PC-9 (cell line): ENCODE measurements at regions of chr21 and their contacts with region 1.

Region 1: GRCh38 chr21:15210235-15210739 is 145.5 kb upstream of the NRIP1 start:
- DNase-seq: peak; percentile 90 to 95
- H3K4me3 ChIP-seq: 0 out of 2 replicates have a peak overlapping the region, but pooled peaks have one; percentile 26
- H3K27ac ChIP-seq: peak overlapping the region; percentile 83
- H3K4me1 ChIP-seq: peaks cover 44% of the 10 kb centered on the region
- H3K27me3 ChIP-seq: no peaks in the 10 kb centered on the region
- CTCF ChIP-seq: no peak

Region 2: GRCh38 chr21:14916676-14917141 is 293.6 kb before region 1 on chr21:
- CTCF ChIA-PET with region 1: no interaction called
- POLR2A ChIA-PET with region 1: no interaction called
- intact Hi-C with region 1: loop called (anchors 2 kb)
- DNase-seq: peak; percentile 62 to 93
- H3K4me3 ChIP-seq: peak overlapping the region; percentile 42
- H3K27ac ChIP-seq: peak overlapping the region; percentile 93
- H3K4me1 ChIP-seq: peaks cover 72% of the 10 kb centered on the region
- H3K27me3 ChIP-seq: no peaks in the 10 kb centered on the region
- CTCF ChIP-seq: no peak

Region 3: GRCh38 chr21:15293240-15293639 is 83.0 kb after region 1 on chr21:
- CTCF ChIA-PET with region 1: no interaction called
- POLR2A ChIA-PET with region 1: no interaction called
- intact Hi-C with region 1: loop called (anchors 2 kb)
- DNase-seq: peak; percentile 43 to 85
- H3K4me3 ChIP-seq: no peak overlapping the region
- H3K27ac ChIP-seq: peak overlapping the region; percentile 56
- H3K4me1 ChIP-seq: peaks cover 30% of the 10 kb centered on the region
- H3K27me3 ChIP-seq: no peaks in the 10 kb centered on the region
- CTCF ChIP-seq: no peak

Region 4: DNA sequence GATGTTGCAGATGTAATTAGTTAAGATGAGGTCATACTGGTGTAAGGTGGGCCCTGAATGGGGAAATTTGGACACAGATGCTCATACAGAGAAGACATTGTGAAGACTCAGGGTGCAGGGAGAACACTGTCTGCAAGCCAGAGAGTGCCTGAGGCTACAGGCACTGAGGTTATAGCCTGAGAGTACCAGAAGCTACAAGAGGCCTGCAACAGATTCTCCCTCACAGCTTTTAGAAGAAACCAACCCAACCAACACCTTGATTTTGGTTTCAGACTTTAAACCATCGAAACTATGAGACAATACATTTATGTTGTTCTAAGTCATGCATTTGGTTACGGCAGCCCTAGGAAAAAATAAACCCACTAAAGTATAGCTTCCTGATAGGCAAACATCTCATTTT is 197.8 kb after region 1 on chr21:
- CTCF ChIA-PET with region 1: no interaction called
- POLR2A ChIA-PET with region 1: no interaction called
- intact Hi-C with region 1: no loop called
- DNase-seq: no peak
- H3K4me3 ChIP-seq: no peak overlapping the region
- H3K27ac ChIP-seq: no peak overlapping the region
- H3K4me1 ChIP-seq: no peaks in the 10 kb centered on the region
- H3K27me3 ChIP-seq: no peaks in the 10 kb centered on the region
- CTCF ChIP-seq: no peak

Region 5: GRCh38 chr21:15422783-15423182 is 212.5 kb after region 1 on chr21:
- CTCF ChIA-PET with region 1: no interaction called
- POLR2A ChIA-PET with region 1: no interaction called
- intact Hi-C with region 1: loop called (anchors 2 kb)
- DNase-seq: peak in 1 of 2 experiments; percentile 7
- H3K4me3 ChIP-seq: no peak overlapping the region
- H3K27ac ChIP-seq: no peak overlapping the region
- H3K4me1 ChIP-seq: no peaks in the 10 kb centered on the region
- H3K27me3 ChIP-seq: no peaks in the 10 kb centered on the region
- CTCF ChIP-seq: no peak